CD4-positive, alpha-beta memory T cell (primary cell): ENCODE measurements at regions of chr14 and their contacts with region 1.

Region 1: GRCh38 chr14:100192672-100193416 is 33.4 kb upstream of the DEGS2 start:
- DNase-seq: peak; percentile 99 to 100 (median 100)
- H3K4me3 ChIP-seq: peak overlapping the region in 1 of 2 donors; percentile 46
- H3K4me3 Mint-ChIP-seq: peak overlapping the region; percentile 54 to 70 (median 66)
- H3K27ac ChIP-seq: peak overlapping the region; percentile 65
- H3K27ac Mint-ChIP-seq: peak overlapping the region; percentile 81 to 96 (median 91)
- H3K4me1 ChIP-seq: peaks cover 13% of the 10 kb centered on the region
- H3K4me1 Mint-ChIP-seq: peaks cover 7 to 19% (median 9%) of the 10 kb centered on the region in 4 donors
- H3K27me3 ChIP-seq: no peaks in the 10 kb centered on the region
- H3K27me3 Mint-ChIP-seq: no peaks in the 10 kb centered on the region

Region 2: GRCh38 chr14:99982537-99983250 is 210.2 kb before region 1 on chr14:
- CTCF ChIA-PET with region 1: interaction called, 116 read pairs
- POLR2A ChIA-PET with region 1: interaction called, 18 read pairs
- intact Hi-C with region 1: loop called (anchors 1 kb)
- DNase-seq: peak; percentile 64 to 73 (median 69)
- H3K4me3 ChIP-seq: no peak overlapping the region
- H3K4me3 Mint-ChIP-seq: no peak overlapping the region
- H3K27ac ChIP-seq: no peak overlapping the region
- H3K27ac Mint-ChIP-seq: no peak overlapping the region
- H3K4me1 ChIP-seq: no peaks in the 10 kb centered on the region
- H3K4me1 Mint-ChIP-seq: peaks cover 3 to 11% (median 10%) of the 10 kb centered on the region in 4 donors
- H3K27me3 ChIP-seq: no peaks in the 10 kb centered on the region
- H3K27me3 Mint-ChIP-seq: no peaks in the 10 kb centered on the region

Region 3: GRCh38 chr14:100067971-100068959 is 124.6 kb before region 1 on chr14:
- CTCF ChIA-PET with region 1: interaction called, 48 read pairs
- POLR2A ChIA-PET with region 1: interaction called, 24 read pairs
- intact Hi-C with region 1: loop called (anchors 1 kb)
- DNase-seq: peak; percentile 90 to 99 (median 94)
- H3K4me3 ChIP-seq: peak overlapping the region; percentile 73 to 100
- H3K4me3 Mint-ChIP-seq: peak overlapping the region; percentile 92 to 100 (median 97)
- H3K27ac ChIP-seq: peak overlapping the region; percentile 81
- H3K27ac Mint-ChIP-seq: peak overlapping the region; percentile 95 to 100 (median 100)
- H3K4me1 ChIP-seq: peaks cover 69% of the 10 kb centered on the region
- H3K4me1 Mint-ChIP-seq: peaks cover 43 to 95% (median 60%) of the 10 kb centered on the region in 4 donors
- H3K27me3 ChIP-seq: no peaks in the 10 kb centered on the region
- H3K27me3 Mint-ChIP-seq: no peaks in the 10 kb centered on the region

Region 4: GRCh38 chr14:100147181-100147631 is 45.6 kb before region 1 on chr14:
- CTCF ChIA-PET with region 1: interaction called, 15 read pairs
- POLR2A ChIA-PET with region 1: interaction called, 11 read pairs
- intact Hi-C with region 1: loop called (anchors 1 kb)
- DNase-seq: peak; percentile 61 to 82 (median 73)
- H3K4me3 ChIP-seq: no peak overlapping the region
- H3K4me3 Mint-ChIP-seq: peak overlapping the region; percentile 54 to 79 (median 74)
- H3K27ac ChIP-seq: no peak overlapping the region
- H3K27ac Mint-ChIP-seq: peak overlapping the region; percentile 73 to 96 (median 88)
- H3K4me1 ChIP-seq: peaks cover 28% of the 10 kb centered on the region
- H3K4me1 Mint-ChIP-seq: peaks cover 7 to 36% (median 20%) of the 10 kb centered on the region in 4 donors
- H3K27me3 ChIP-seq: no peaks in the 10 kb centered on the region
- H3K27me3 Mint-ChIP-seq: no peaks in the 10 kb centered on the region

Region 5: GRCh38 chr14:100221533-100222223 is 28.8 kb after region 1 on chr14:
- CTCF ChIA-PET with region 1: interaction called, 94 read pairs
- POLR2A ChIA-PET with region 1: interaction called, 44 read pairs
- intact Hi-C with region 1: loop called (anchors 1 kb)
- DNase-seq: peak; percentile 67 to 81 (median 76)
- H3K4me3 ChIP-seq: peak overlapping the region; percentile 82 to 92
- H3K4me3 Mint-ChIP-seq: no peak overlapping the region
- H3K27ac ChIP-seq: peak overlapping the region; percentile 76
- H3K27ac Mint-ChIP-seq: no peak overlapping the region
- H3K4me1 ChIP-seq: peaks cover 43% of the 10 kb centered on the region
- H3K4me1 Mint-ChIP-seq: peaks cover 7 to 29% (median 18%) of the 10 kb centered on the region in 4 donors
- H3K27me3 ChIP-seq: no peaks in the 10 kb centered on the region
- H3K27me3 Mint-ChIP-seq: no peaks in the 10 kb centered on the region

Region 6: GRCh38 chr14:100375963-100376735 is 183.3 kb after region 1 on chr14:
- CTCF ChIA-PET with region 1: interaction called, 3 read pairs
- POLR2A ChIA-PET with region 1: no interaction called
- intact Hi-C with region 1: loop called (anchors 2 kb)
- DNase-seq: peak; percentile 88 to 93 (median 90)
- H3K4me3 ChIP-seq: peak within 1 kb of the TSS; percentile 83 to 92
- H3K4me3 Mint-ChIP-seq: peak within 1 kb of the TSS; percentile 92 to 97 (median 94)
- H3K27ac ChIP-seq: peak within 1 kb of the TSS; percentile 79
- H3K27ac Mint-ChIP-seq: peak within 1 kb of the TSS; percentile 90 to 96 (median 94)
- H3K4me1 ChIP-seq: peaks cover 28% of the 10 kb centered on the region
- H3K4me1 Mint-ChIP-seq: peaks cover 23 to 53% (median 32%) of the 10 kb centered on the region in 4 donors
- H3K27me3 ChIP-seq: no peaks in the 10 kb centered on the region
- H3K27me3 Mint-ChIP-seq: no peaks in the 10 kb centered on the region

Region 7: GRCh38 chr14:100747021-100747586 is 554.3 kb after region 1 on chr14:
- CTCF ChIA-PET with region 1: no interaction called
- POLR2A ChIA-PET with region 1: no interaction called
- intact Hi-C with region 1: no loop called
- DNase-seq: no peak
- H3K4me3 ChIP-seq: no peak overlapping the region
- H3K4me3 Mint-ChIP-seq: no peak overlapping the region
- H3K27ac ChIP-seq: no peak overlapping the region
- H3K27ac Mint-ChIP-seq: no peak overlapping the region
- H3K4me1 ChIP-seq: no peaks in the 10 kb centered on the region
- H3K4me1 Mint-ChIP-seq: no peaks in the 10 kb centered on the region
- H3K27me3 ChIP-seq: peaks cover 3% of the 10 kb centered on the region
- H3K27me3 Mint-ChIP-seq: peaks cover 5 to 10% of the 10 kb centered on the region in 2 donors